ENCODE measurements at regions of chr19 and their contacts with region 1.

Region 1: DNA sequence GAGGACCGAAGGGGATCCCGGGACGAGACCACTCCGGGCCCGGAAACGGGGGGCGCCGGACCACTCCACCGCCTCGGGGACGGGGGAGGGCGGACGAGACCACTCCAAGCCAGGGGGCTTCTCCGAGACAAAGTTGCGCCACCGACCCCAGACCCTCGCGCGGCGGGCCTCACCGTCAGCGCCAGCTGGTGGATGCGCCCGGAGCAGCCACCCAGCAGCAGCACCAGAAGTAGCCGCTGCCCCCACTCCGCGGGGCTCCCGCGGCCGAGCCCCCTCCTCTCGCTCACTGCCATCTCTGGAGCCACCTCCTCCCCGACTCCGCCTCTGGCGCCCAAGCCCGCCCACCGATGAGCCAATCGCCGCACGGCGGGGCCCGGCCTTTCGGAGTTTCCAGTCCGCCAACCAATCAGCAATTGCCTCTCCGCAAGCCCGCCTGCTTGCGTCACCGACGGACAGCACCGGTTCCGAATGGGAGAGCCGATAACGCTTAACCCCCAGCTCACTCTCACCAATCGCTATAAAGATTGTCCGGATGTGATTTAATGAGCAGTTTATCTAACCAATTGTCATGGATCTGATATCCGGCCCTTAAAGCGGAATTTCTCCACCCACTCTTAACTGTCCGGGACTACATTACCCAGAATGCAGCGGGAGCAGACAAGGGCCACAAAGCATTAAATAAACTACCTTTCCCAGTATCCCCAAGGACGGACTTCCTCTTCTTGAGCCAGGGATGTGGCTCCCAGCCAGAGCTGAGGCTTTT is at the start of gene GPR108:
- DNase-seq: peak; percentile 100
- H3K4me3 Mint-ChIP-seq: peak within 1 kb of the TSS; percentile 93
- H3K27ac Mint-ChIP-seq: peak within 1 kb of the TSS; percentile 99
- H3K4me1 Mint-ChIP-seq: peaks cover 38% of the 10 kb centered on the region
- H3K27me3 Mint-ChIP-seq: no peaks in the 10 kb centered on the region
- total RNA-seq, gene GPR108: 105 to 107 TPM

Region 2: GRCh38 chr19:6516659-6517291 is 220.7 kb before region 1 on chr19:
- CTCF ChIA-PET with region 1: interaction called, 34 read pairs
- POLR2A ChIA-PET with region 1: interaction called, 9 read pairs
- DNase-seq: peak; percentile 93
- H3K4me3 Mint-ChIP-seq: peak overlapping the region; percentile 98
- H3K27ac Mint-ChIP-seq: peak overlapping the region; percentile 88
- H3K4me1 Mint-ChIP-seq: peaks cover 42% of the 10 kb centered on the region
- H3K27me3 Mint-ChIP-seq: no peaks in the 10 kb centered on the region

Region 3: DNA sequence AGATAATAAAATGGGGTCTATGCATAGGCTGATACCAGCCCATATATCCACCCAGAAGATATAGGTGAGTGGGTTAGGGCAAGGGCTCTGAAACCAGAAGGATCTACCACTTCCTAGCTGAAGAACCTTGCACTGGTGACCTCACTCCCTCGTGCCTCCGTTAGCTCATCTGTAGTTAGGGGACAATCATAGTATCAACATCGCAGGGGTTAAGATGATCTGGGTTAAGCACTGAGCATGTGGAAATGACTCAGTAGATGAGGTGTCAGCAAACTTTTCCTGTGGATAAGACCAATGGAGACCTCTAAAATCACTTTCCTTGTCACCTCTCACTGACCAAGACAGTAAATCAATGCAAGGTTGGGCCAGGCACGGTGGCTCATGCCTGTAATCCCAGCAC is 98.0 kb before region 1 on chr19:
- CTCF ChIA-PET with region 1: interaction called, 5 read pairs
- POLR2A ChIA-PET with region 1: interaction called, 10 read pairs
- DNase-seq: peak; percentile 68
- H3K4me3 Mint-ChIP-seq: no peak overlapping the region
- H3K27ac Mint-ChIP-seq: peak overlapping the region; percentile 47
- H3K4me1 Mint-ChIP-seq: peaks cover 46% of the 10 kb centered on the region
- H3K27me3 Mint-ChIP-seq: peaks cover 1% of the 10 kb centered on the region

Region 4: GRCh38 chr19:6674868-6675305 is 62.6 kb before region 1 on chr19:
- CTCF ChIA-PET with region 1: interaction called, 12 read pairs
- POLR2A ChIA-PET with region 1: interaction called, 9 read pairs
- DNase-seq: peak; percentile 94
- H3K4me3 Mint-ChIP-seq: peak overlapping the region; percentile 66
- H3K27ac Mint-ChIP-seq: peak overlapping the region; percentile 81
- H3K4me1 Mint-ChIP-seq: peaks cover 70% of the 10 kb centered on the region
- H3K27me3 Mint-ChIP-seq: peaks cover 8% of the 10 kb centered on the region

Region 5: DNA sequence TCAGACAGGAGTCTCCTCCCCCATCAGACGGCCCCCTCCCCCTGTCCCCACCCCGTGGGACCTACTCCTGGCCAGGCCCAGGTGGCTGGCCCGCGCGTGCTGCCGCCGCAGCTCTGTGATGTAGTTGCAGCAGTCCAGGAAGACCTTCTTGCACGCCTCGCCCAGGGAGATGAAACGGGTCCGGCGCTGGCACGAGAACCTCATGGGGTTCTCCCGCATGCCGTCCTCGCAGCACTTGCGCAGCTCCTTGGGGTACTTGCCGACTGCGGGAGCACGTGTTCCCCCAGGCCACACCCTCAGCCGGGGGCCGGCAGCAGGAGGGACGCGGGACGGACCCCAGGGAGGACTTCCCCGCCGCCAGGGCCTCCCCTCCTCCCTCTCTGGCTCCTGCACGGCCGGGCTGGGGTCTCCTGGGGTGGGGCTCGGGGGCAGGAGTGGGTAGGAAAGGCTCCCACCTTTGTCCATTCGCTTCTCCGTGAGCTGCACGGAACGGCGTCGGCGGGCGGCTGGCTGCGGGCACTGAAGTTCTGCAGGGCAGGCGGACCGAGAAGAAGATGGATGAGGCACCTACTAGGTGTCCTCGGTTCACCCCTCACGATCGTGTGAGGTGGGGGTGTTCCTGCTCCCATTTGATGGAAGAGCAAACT is 30.3 kb before region 1 on chr19:
- CTCF ChIA-PET with region 1: no interaction called
- POLR2A ChIA-PET with region 1: no interaction called
- DNase-seq: no peak
- H3K4me3 Mint-ChIP-seq: no peak overlapping the region
- H3K27ac Mint-ChIP-seq: no peak overlapping the region
- H3K4me1 Mint-ChIP-seq: peaks cover 6% of the 10 kb centered on the region
- H3K27me3 Mint-ChIP-seq: peaks cover 36% of the 10 kb centered on the region

Region 6: DNA sequence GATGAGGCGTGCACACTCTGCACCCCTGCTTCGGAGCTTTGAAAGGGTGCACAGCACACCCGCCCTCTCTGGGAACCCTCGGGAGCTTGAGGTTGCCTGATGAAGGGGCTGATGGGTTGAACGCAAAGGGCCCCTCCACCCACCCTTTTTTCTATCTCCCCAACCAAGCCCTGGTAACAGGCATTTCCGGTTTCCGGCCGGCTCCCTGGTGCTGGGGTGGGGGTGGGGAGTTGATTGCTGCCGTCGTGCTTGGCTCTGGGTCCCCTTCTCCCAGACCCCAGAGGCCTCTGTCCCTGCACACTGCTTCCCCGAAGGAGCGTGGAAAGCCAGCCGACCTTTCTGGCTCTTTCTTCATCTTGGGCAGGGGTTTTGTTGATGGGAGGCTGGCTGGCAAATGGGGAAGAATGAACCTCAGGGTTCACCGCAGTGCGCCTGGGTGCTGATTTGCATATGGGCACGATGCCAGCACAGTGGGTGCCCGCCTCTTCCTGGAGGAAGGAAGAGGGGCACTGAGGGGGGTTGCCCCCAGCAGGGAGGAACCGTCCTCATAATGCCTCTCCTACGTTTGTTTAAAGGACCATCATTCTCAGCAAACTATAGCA is 64.1 kb after region 1 on chr19:
- CTCF ChIA-PET with region 1: interaction called, 21 read pairs
- POLR2A ChIA-PET with region 1: interaction called, 9 read pairs
- DNase-seq: peak; percentile 84
- H3K4me3 Mint-ChIP-seq: peak overlapping the region; percentile 74
- H3K27ac Mint-ChIP-seq: peak overlapping the region; percentile 94
- H3K4me1 Mint-ChIP-seq: peaks cover 66% of the 10 kb centered on the region
- H3K27me3 Mint-ChIP-seq: no peaks in the 10 kb centered on the region

Measured in activated CD4-positive, alpha-beta memory T cell treated with anti-CD3 and anti-CD28 coated beads, Interleukin-2, amount 10 ng/mL, durations not matched to agents 7 days and 5 days (primary cell).